Posterior cingulate gyrus (tissue), 11 donors: ENCODE measurements at regions of chr2 and their contacts with region 1.

Region 1: DNA sequence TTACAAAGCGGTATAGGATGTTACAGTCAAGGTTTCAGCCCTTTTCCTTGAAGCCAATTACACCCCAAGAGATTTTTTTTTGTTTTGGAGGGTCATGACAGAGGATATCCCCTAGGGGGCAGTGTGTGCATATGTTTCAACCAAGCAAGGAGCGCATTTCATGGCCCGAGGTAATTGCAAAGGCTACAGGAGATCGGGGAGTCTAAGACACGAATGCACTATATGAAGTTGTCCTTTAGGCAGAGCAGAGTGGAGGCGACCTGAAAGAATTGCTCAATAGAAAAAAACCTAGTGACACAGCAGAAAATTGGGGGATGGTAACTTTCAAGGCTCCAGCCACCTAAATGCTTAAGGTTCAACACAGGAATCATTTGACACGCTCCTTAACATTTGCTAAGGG is 219.8 kb upstream of the PARD3B start:
- DNase-seq: peak in 7 of 10 donors; percentile 32 to 90 (median 53)

Region 2: GRCh38 chr2:204260162-204260877 is 65.1 kb before region 1 on chr2:
- intact Hi-C with region 1: loop called (anchors 5 kb)
- DNase-seq: peak in 7 of 10 donors; percentile 22 to 88 (median 68)

Region 3: GRCh38 chr2:204625167-204625566 is 299.7 kb after region 1 on chr2:
- intact Hi-C with region 1: loop called (anchors 2 kb)
- DNase-seq: peak in 5 of 10 donors; percentile 8 to 80 (median 35)

Region 4: DNA sequence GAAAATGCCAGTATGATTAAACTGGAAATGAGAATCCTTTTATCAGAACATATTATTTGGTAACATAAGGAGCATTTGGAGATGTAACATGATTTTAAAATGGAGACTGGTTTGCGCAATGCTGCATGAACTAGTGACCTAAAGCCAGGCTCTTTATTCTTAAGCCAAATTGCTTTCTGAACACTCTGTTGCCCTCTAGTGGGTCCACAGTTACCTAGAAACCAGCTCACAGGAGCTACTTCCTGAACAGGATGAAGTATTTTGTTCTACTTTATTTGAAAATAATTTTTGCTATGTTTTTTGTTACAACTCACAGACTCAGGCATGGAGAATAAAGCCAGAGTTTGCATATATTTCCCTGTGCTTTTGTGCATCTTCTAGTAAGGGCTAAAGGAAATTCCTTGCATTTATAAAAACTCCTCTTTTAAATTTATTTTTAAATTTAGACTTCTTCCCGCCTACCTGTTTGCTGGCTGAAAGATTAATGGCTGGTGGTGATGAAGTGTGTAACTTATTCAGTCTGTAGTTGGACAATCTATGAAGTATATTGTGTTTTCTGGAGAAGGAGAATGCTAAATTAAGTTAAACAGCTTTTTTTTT is 366.5 kb after region 1 on chr2:
- intact Hi-C with region 1: loop called (anchors 2 kb)
- DNase-seq: peak in 1 of 10 donors; percentile 16

Region 5: DNA sequence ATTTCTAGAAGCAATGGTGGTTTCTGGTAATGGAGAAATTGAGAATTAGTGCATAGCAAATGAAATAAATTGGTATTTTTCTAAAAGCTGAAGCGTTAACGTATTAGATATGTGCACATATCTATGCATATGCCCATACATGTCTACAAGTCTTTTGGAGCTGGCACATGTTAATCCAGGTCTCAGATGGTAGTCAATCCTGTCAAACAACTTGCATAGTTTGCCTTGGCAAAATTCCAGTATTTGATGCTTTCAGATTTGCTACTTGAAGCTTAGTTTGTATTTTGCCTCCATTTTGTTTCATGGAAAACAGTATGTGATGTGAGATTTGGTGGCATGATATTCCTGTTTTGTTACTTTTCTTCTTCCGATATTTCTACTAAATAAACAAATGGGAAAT is 524.4 kb after region 1 on chr2:
- intact Hi-C with region 1: loop called (anchors 10 kb)
- DNase-seq: no peak

Region 6: DNA sequence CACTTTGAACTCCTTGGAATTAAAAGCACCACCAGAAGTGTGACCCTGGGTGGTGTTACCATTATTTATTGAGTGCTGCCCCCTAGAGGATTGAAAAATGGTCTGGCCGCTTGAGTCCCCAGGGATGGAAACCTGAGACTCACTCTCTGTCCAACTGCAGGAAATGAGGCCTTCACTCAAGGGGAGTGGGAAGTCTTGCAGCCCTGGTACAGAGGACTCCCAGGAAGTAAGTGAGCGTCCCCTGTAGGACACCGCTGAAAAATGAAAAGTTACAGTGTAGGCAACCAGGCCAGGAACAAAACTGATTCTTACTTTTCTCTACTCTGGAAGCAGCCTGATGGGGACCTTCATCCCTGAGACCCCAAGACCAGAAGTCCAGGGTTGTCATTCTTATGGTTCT is 1354.6 kb after region 1 on chr2:
- intact Hi-C with region 1: loop called (anchors 5 kb)
- DNase-seq: peak in 4 of 10 donors; percentile 33 to 77 (median 40)